Adrenal gland (tissue), 19 donors: ENCODE measurements at regions of chr7 and their contacts with region 1.

Region 1: DNA sequence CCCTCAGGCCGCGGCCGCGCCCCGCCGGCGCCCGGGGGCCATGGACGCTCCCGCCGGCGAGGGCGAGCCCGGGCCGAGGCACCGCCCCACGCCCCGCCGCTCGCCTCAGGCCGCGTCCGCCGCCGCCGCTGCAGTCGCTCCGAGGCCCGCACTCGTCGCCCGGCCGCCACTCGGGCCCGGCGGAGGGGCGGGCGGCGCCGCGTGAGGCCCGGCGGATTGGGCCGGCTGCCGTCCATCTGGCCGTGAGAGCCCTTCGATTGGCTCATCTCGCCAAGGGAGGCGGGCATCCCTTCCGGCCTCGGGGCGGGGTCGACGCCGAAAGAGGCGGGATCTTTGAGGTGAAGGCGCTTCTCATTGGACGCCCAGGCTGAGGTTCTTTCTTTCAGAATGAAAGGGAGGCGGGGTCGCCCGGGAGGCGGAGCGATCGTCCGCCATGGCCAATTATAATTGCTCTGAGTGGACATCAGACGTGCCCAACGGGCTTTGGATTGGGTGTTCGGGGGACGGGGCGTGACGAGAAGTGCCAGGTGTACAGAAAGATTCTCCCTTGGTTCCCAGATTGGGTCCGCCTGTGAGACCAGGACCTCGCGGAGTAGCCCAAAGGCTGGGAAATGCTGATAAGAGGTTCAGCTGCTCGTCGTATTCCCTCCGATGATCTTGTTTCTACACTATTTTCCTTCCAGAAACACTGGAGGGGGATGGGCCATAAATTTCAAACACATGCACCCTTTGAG is at the start of gene GNA12:
- DNase-seq: peak; percentile 98 to 100 (median 99)
- H3K4me3 ChIP-seq: peak within 1 kb of the TSS in 3 of 4 donors; percentile 23 to 79 (median 78)
- H3K27ac ChIP-seq: peak within 1 kb of the TSS in 3 of 5 donors; percentile 60 to 94 (median 65)
- H3K4me1 ChIP-seq: peaks cover 11 to 33% of the 10 kb centered on the region in 2 donors
- H3K27me3 ChIP-seq: no peaks in the 10 kb centered on the region
- CTCF ChIP-seq: no peak
- POLR2A ChIP-seq: peak; percentile 59 to 79
- total RNA-seq, gene GNA12: 11.1 to 65.1 (median 52.1) TPM

Region 2: GRCh38 chr7:2632733-2633537 is 211.4 kb before region 1 on chr7:
- intact Hi-C with region 1: no loop called
- DNase-seq: peak in 6 of 7 donors; percentile 71 to 88 (median 80)
- H3K4me3 ChIP-seq: peak overlapping the region in 3 of 4 donors; percentile 63 to 84 (median 79)
- H3K27ac ChIP-seq: peak overlapping the region; percentile 70 to 98 (median 97)
- H3K4me1 ChIP-seq: peaks cover 47 to 56% of the 10 kb centered on the region in 2 donors
- H3K27me3 ChIP-seq: no peaks in the 10 kb centered on the region
- CTCF ChIP-seq: no peak
- POLR2A ChIP-seq: peak in 1 of 2 donors; percentile 5

Region 3: DNA sequence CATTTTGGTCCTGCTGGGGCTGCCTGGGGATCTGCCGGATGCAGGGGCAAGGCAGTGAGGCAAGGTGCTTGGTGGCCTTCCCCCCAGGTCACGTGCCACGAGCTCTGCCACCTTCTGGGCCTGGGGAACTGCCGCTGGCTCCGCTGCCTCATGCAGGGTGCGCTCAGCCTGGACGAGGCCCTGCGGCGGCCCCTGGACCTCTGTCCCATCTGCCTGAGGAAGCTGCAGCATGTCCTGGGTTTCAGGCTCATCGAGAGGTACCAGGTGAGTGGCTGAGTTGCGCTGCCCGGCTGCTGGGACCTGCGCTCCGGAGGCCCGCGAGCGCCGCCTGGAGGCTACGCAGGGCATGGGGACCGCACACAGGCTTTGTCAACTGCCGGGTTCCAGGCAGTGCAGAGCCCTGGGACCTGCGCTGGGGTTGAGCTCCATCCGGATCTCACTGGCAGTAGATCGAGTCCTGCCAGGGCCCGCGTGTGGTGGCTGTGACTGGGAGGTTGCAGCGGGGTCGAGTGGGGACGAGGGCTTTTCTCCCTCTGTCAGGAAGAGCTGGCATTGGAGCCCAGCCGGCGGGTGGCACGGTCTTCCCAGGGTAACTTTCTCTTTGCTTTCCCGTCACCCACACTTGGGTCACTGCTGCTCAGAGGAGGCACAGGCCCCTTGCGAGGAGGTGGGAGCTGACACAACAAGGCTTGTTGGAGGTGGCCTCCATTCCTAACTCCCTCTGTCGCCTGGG is 134.6 kb before region 1 on chr7:
- intact Hi-C with region 1: loop called in 1 of 2 experiments (anchors 10 kb)
- DNase-seq: peak; percentile 55 to 82 (median 74)
- H3K4me3 ChIP-seq: no peak overlapping the region
- H3K27ac ChIP-seq: no peak overlapping the region
- H3K4me1 ChIP-seq: peaks cover 0 to 4% of the 10 kb centered on the region in 2 donors
- H3K27me3 ChIP-seq: no peaks in the 10 kb centered on the region
- CTCF ChIP-seq: peak; percentile 69 to 90 (median 80)
- POLR2A ChIP-seq: no peak

Region 4: GRCh38 chr7:3200504-3200903 is 356.2 kb after region 1 on chr7:
- intact Hi-C with region 1: no loop called
- DNase-seq: peak in 2 of 7 donors; percentile 9 to 52
- H3K4me3 ChIP-seq: no peak overlapping the region
- H3K27ac ChIP-seq: no peak overlapping the region
- H3K4me1 ChIP-seq: no peaks in the 10 kb centered on the region
- H3K27me3 ChIP-seq: no peaks in the 10 kb centered on the region
- CTCF ChIP-seq: peak in 1 of 6 experiments; percentile 22
- POLR2A ChIP-seq: no peak